ENCODE measurements at regions of chr1 and their contacts with region 1.

Region 1: DNA sequence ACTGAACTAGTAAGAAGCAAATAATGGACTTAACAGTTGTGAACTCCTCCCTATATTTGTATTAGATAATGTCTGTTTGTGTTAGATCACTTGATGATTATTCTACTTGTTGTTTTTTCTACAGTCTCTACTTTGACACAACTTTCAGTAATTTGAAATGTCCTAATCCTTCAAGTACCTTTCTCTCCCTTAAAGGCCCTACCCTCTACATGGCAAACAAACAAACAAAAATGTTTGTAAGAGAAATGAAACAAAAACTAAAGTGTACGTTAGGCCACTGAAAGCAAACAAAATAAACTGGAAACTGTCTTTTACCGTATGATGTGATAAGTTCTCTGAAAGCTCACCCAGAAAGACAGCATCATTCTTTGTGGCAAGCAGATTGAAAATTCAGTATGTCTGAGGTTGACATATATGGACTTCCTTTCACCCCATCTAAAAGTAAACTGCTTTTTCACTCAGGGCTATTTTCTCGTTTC is 255.9 kb upstream of the SNX7 start:
- DNase-seq: no peak
- ATAC-seq: no peak
- H3K4me3 ChIP-seq: no peak overlapping the region
- H3K4me3 Mint-ChIP-seq: peak overlapping the region in 1 of 10 donors; percentile 86
- H3K27ac ChIP-seq: no peak overlapping the region
- H3K27ac Mint-ChIP-seq: peak overlapping the region in 1 of 9 donors; percentile 94
- H3K4me1 ChIP-seq: no peaks in the 10 kb centered on the region
- H3K4me1 Mint-ChIP-seq: peaks cover 0 to 37% (median 0%) of the 10 kb centered on the region in 7 donors
- H3K27me3 ChIP-seq: no peaks in the 10 kb centered on the region
- H3K27me3 Mint-ChIP-seq: no peaks in the 10 kb centered on the region

Region 2: DNA sequence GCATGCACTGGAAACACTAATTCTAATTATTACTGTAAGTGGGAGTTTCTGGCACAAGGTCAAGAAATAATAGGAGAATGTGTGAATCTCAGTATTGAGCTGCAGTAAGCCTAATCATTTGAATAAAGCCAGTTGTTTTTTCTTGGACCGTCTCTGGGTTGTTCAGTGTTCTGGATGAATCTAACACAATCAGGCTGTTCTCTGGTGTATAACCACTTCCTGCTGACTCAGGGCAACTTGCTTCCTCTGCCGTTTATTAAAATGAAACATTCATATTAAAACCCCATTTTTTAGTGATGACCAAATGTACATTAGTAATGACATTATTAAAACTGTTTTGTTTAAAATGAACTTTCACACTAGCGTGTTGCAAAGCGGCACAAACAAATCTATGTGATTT is 17.2 kb before region 1 on chr1:
- CTCF ChIA-PET with region 1: no interaction called
- POLR2A ChIA-PET with region 1: no interaction called
- intact Hi-C with region 1: loop called in 1 of 2 experiments (anchors 2 kb)
- DNase-seq: no peak
- ATAC-seq: peak; percentile 84
- H3K4me3 ChIP-seq: no peak overlapping the region
- H3K4me3 Mint-ChIP-seq: peak overlapping the region in 2 of 10 donors; percentile 13 to 68
- H3K27ac ChIP-seq: no peak overlapping the region
- H3K27ac Mint-ChIP-seq: peak overlapping the region in 2 of 9 donors; percentile 2 to 51
- H3K4me1 ChIP-seq: peaks cover 0 to 24% of the 10 kb centered on the region in 2 donors
- H3K4me1 Mint-ChIP-seq: peaks cover 0 to 23% (median 6%) of the 10 kb centered on the region in 7 donors
- H3K27me3 ChIP-seq: no peaks in the 10 kb centered on the region
- H3K27me3 Mint-ChIP-seq: peaks cover 0 to 3% (median 0%) of the 10 kb centered on the region in 5 donors

Measured in naive thymus-derived CD4-positive, alpha-beta T cell (primary cell).